ENCODE measurements at regions of chr12 and their contacts with region 1.

Region 1: DNA sequence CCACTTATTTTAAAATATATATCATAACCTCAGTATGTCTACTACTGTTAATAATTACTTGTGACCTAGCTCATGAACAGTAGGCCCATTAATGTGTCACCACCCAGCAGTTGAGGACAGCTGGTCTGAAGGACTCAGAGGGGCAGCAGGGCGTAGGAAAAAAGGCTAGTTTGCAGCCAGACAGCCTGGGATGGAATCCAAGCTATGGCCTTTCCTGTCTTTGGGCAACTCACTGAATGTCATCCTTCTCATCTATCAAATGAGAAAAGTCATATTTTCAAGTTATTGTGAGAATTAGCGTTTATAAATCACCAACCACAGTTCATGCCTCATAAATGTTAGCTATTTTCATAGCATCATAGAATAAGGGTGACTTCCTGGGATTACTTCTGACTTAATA is 12.3 kb downstream of the DENND5B start:
- DNase-seq: no peak
- H3K4me3 ChIP-seq: no peak overlapping the region
- H3K27ac ChIP-seq: no peak overlapping the region
- H3K4me1 ChIP-seq: no peaks in the 10 kb centered on the region
- H3K27me3 ChIP-seq: no peaks in the 10 kb centered on the region
- CTCF ChIP-seq: no peak

Region 2: DNA sequence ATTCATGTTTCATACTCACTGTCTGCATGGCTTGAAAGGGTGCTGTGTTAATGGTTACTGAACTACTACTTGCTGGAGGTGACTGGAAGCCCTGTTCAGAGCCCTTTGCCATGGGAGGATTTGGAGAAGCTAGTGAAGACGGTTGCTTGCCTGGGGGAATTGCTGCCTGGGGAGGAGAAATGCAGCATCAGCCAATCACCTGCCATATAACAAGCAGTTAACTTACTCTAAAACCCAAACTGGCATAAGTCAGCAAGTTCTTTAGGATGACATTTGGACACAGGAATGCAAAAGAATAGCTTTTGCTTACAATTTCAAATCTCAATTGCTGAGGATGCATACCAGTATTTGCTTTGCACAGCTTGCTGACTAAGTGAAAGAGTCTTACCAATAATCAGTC is 859.6 kb before region 1 on chr12:
- CTCF ChIA-PET with region 1: no interaction called
- POLR2A ChIA-PET with region 1: no interaction called
- intact Hi-C with region 1: no loop called
- DNase-seq: no peak
- H3K4me3 ChIP-seq: no peak overlapping the region
- H3K27ac ChIP-seq: no peak overlapping the region
- H3K4me1 ChIP-seq: no peaks in the 10 kb centered on the region
- H3K27me3 ChIP-seq: no peaks in the 10 kb centered on the region
- CTCF ChIP-seq: no peak

Region 3: GRCh38 chr12:31560516-31560915 is 18.1 kb before region 1 on chr12:
- CTCF ChIA-PET with region 1: no interaction called
- POLR2A ChIA-PET with region 1: interaction called, 14 read pairs
- intact Hi-C with region 1: no loop called
- DNase-seq: no peak
- H3K4me3 ChIP-seq: no peak overlapping the region
- H3K27ac ChIP-seq: no peak overlapping the region
- H3K4me1 ChIP-seq: no peaks in the 10 kb centered on the region
- H3K27me3 ChIP-seq: no peaks in the 10 kb centered on the region
- CTCF ChIP-seq: no peak

Region 4: GRCh38 chr12:31603546-31604009 is 24.9 kb after region 1 on chr12:
- CTCF ChIA-PET with region 1: no interaction called
- POLR2A ChIA-PET with region 1: no interaction called
- intact Hi-C with region 1: no loop called
- DNase-seq: no peak
- H3K4me3 ChIP-seq: no peak overlapping the region
- H3K27ac ChIP-seq: no peak overlapping the region
- H3K4me1 ChIP-seq: no peaks in the 10 kb centered on the region
- H3K27me3 ChIP-seq: no peaks in the 10 kb centered on the region
- CTCF ChIP-seq: no peak